Activated T-helper 2 cell treated with anti-CD3 and anti-CD28 coated beads, Interferon-gamma antibody, Interleukin-2, Interleukin-4, amounts not matched to agents 10 μg/mL and 5 μg/mL and 100 μg/mL, durations not matched to agents 14 hours and 24 hours and 36 hours (primary cell): ENCODE measurements at regions of chr2 and their contacts with region 1.

Region 1: GRCh38 chr2:225660262-225661131 is 261.0 kb downstream of the NYAP2 start:
- DNase-seq: peak; percentile 36
- H3K4me3 Mint-ChIP-seq: no peak overlapping the region
- H3K27ac Mint-ChIP-seq: no peak overlapping the region
- H3K4me1 Mint-ChIP-seq: no peaks in the 10 kb centered on the region
- H3K27me3 Mint-ChIP-seq: peaks cover 6% of the 10 kb centered on the region

Region 2: GRCh38 chr2:225122583-225123486 is 537.7 kb before region 1 on chr2:
- intact Hi-C with region 1: loop called (anchors 2 kb)
- DNase-seq: no peak
- H3K4me3 Mint-ChIP-seq: no peak overlapping the region
- H3K27ac Mint-ChIP-seq: no peak overlapping the region
- H3K4me1 Mint-ChIP-seq: no peaks in the 10 kb centered on the region
- H3K27me3 Mint-ChIP-seq: peaks cover 19% of the 10 kb centered on the region

Region 3: GRCh38 chr2:225282858-225283710 is 377.4 kb before region 1 on chr2:
- intact Hi-C with region 1: loop called (anchors 1 kb)
- DNase-seq: no peak
- H3K4me3 Mint-ChIP-seq: no peak overlapping the region
- H3K27ac Mint-ChIP-seq: no peak overlapping the region
- H3K4me1 Mint-ChIP-seq: no peaks in the 10 kb centered on the region
- H3K27me3 Mint-ChIP-seq: no peaks in the 10 kb centered on the region

Region 4: GRCh38 chr2:225649274-225649673 is 11.2 kb before region 1 on chr2:
- intact Hi-C with region 1: no loop called
- DNase-seq: no peak
- H3K4me3 Mint-ChIP-seq: no peak overlapping the region
- H3K27ac Mint-ChIP-seq: no peak overlapping the region
- H3K4me1 Mint-ChIP-seq: no peaks in the 10 kb centered on the region
- H3K27me3 Mint-ChIP-seq: no peaks in the 10 kb centered on the region